ENCODE measurements at regions of chr1 and their contacts with region 1.

Region 1: GRCh38 chr1:40040511-40041465 is at the start of gene CAP1:
- DNase-seq: peak; percentile 100
- ATAC-seq: peak; percentile 85
- H3K4me3 Mint-ChIP-seq: peak within 1 kb of the TSS; percentile 98
- H3K27ac Mint-ChIP-seq: peak within 1 kb of the TSS; percentile 94
- H3K4me1 Mint-ChIP-seq: peaks cover 78% of the 10 kb centered on the region
- H3K27me3 Mint-ChIP-seq: no peaks in the 10 kb centered on the region
- CTCF ChIP-seq: no peak
- total RNA-seq, gene CAP1: 410 and 411 TPM in 2 replicates

Region 2: DNA sequence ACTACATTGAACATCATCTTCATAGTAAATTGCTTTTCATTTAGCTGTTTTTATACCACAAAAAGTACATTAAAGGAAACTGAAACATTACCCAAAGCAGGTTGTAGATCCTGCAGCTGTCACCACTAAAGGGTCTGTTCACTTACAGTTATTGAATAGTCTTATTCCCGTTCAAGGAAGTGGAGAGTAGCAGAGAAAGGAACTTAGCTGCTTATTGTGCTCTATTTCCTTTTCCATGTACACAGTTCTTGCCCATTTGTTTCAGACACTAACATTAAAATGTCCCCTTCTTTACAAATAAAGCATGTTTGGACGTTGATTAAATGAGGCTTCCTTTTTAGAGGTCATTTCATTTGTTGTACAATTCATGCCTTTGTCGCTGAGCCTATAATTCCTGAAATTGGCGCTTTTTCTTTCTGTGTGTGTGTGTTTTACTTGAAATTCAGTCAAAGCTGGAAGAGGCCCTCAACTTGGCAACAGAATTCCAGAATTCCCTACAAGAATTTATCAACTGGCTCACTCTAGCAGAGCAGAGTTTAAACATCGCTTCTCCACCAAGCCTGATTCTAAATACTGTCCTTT is 593.7 kb before region 1 on chr1:
- CTCF ChIA-PET with region 1: no interaction called
- POLR2A ChIA-PET with region 1: no interaction called
- intact Hi-C with region 1: no loop called
- DNase-seq: no peak
- ATAC-seq: no peak
- H3K4me3 Mint-ChIP-seq: no peak overlapping the region
- H3K27ac Mint-ChIP-seq: no peak overlapping the region
- H3K4me1 Mint-ChIP-seq: no peaks in the 10 kb centered on the region
- H3K27me3 Mint-ChIP-seq: no peaks in the 10 kb centered on the region
- CTCF ChIP-seq: no peak

Region 3: GRCh38 chr1:39954816-39955546 is 85.8 kb before region 1 on chr1 and contains the start of gene MFSD2A:
- CTCF ChIA-PET with region 1: no interaction called
- POLR2A ChIA-PET with region 1: interaction called, 38 read pairs
- intact Hi-C with region 1: loop called (anchors 1 kb)
- DNase-seq: peak; percentile 85
- ATAC-seq: peak; percentile 94
- H3K4me3 Mint-ChIP-seq: peak within 1 kb of the TSS; percentile 95
- H3K27ac Mint-ChIP-seq: peak within 1 kb of the TSS; percentile 86
- H3K4me1 Mint-ChIP-seq: peaks cover 41% of the 10 kb centered on the region
- H3K27me3 Mint-ChIP-seq: no peaks in the 10 kb centered on the region
- CTCF ChIP-seq: no peak
- total RNA-seq, gene MFSD2A: 30.3 and 36.0 TPM in 2 replicates

Region 4: DNA sequence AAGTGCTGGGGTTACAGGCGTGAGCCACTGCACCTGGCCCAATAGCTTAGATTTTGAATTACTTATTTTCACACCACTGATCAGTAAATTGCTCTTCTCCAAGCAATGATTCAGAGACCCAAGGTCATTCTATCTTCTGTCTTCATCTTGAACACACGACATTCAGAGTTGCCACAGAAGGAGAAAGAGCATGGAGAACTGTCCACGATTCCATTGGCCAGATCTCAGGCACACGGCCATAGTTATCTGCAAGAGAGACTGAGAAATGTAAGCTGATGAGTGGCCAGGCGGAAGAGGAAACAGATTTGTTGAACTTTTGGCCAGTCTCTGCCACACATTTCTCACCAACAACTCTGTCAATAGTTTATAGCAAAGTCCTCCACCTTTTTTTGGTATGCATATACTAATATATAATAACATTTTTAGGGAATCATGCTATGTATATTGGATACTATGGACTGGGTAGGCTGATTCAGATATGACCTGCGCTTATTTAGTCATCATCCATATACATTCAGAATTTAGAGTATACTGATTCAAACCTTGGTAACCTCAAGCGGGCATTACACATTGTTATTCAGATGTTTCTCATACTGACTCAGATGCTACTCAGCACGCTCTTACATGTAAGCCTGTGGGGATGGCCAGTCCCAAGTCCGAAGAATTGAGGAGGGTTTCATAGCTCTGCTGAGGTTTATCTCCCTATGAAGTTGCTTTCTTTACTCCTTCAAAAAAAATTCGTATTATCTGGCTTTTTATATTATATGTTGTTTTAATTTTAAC is 25.8 kb before region 1 on chr1:
- CTCF ChIA-PET with region 1: no interaction called
- POLR2A ChIA-PET with region 1: interaction called, 13 read pairs
- intact Hi-C with region 1: loop called (anchors 2 kb)
- DNase-seq: no peak
- ATAC-seq: no peak
- H3K4me3 Mint-ChIP-seq: no peak overlapping the region
- H3K27ac Mint-ChIP-seq: no peak overlapping the region
- H3K4me1 Mint-ChIP-seq: peaks cover 15% of the 10 kb centered on the region
- H3K27me3 Mint-ChIP-seq: no peaks in the 10 kb centered on the region
- CTCF ChIP-seq: no peak

Region 5: GRCh38 chr1:40059338-40059959 is 18.7 kb after region 1 on chr1:
- CTCF ChIA-PET with region 1: interaction called, 12 read pairs
- POLR2A ChIA-PET with region 1: interaction called, 90 read pairs
- intact Hi-C with region 1: no loop called
- DNase-seq: no peak
- ATAC-seq: peak; percentile 61
- H3K4me3 Mint-ChIP-seq: peak overlapping the region; percentile 59
- H3K27ac Mint-ChIP-seq: peak overlapping the region; percentile 72
- H3K4me1 Mint-ChIP-seq: peaks cover 95% of the 10 kb centered on the region
- H3K27me3 Mint-ChIP-seq: no peaks in the 10 kb centered on the region
- CTCF ChIP-seq: no peak

Region 6: GRCh38 chr1:40078512-40079333 is 37.9 kb after region 1 on chr1:
- CTCF ChIA-PET with region 1: interaction called, 4 read pairs
- POLR2A ChIA-PET with region 1: interaction called, 10 read pairs
- intact Hi-C with region 1: loop called (anchors 1 kb)
- DNase-seq: no peak
- ATAC-seq: peak; percentile 92
- H3K4me3 Mint-ChIP-seq: no peak overlapping the region
- H3K27ac Mint-ChIP-seq: no peak overlapping the region
- H3K4me1 Mint-ChIP-seq: peaks cover 13% of the 10 kb centered on the region
- H3K27me3 Mint-ChIP-seq: no peaks in the 10 kb centered on the region
- CTCF ChIP-seq: peak; percentile 74

Region 7: DNA sequence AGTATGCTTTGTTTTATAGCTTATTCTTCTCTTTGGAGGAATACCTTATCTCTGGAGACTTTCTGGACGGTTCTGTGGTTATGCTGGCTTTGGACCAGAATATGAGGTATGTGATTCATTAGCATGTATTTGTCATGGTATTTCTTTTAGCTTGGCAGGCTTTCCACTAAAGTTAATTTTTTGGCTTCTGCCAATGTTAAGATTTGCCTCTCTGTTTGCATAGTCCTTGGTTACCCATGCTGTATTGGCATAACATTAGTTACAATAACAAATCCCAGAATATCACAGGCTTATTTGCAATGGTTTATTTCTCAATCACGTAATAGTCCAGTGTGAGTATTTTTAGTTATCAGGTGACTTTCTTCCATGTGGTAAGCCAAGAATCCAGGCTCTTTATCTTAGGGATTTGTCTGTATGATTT is 227.0 kb after region 1 on chr1:
- CTCF ChIA-PET with region 1: no interaction called
- POLR2A ChIA-PET with region 1: no interaction called
- intact Hi-C with region 1: no loop called
- DNase-seq: no peak
- ATAC-seq: no peak
- H3K4me3 Mint-ChIP-seq: no peak overlapping the region
- H3K27ac Mint-ChIP-seq: no peak overlapping the region
- H3K4me1 Mint-ChIP-seq: peaks cover under 1% of the 10 kb centered on the region
- H3K27me3 Mint-ChIP-seq: no peaks in the 10 kb centered on the region
- CTCF ChIP-seq: no peak

Measured in activated B cell treated with CpG ODN at 0.5 μM for 24 hours (primary cell).